ENCODE measurements at regions of chr12 and their contacts with region 1.

Region 1: DNA sequence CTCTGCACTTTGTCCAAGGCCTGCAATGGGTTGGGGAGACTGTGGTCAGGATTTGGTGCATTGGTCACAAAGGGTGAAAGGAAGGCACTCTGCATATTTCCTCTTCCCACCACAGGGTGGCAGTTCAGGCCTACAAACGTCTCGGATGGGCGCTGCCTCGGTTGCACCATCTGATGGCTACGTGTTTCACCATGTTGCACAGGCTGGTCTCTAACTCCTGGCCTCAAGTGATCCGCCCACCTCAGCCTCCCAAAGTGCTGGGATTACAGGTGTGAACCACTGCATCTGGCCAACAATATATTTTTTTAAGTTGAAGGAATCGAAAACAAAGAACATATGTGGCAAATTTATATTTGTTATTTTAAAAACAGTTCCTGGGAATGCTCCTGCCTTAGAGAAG is 35.1 kb downstream of the TMBIM6 start:
- DNase-seq: peak; percentile 64
- ATAC-seq: peak; percentile 93
- H3K4me3 ChIP-seq: peak overlapping the region in 1 of 2 experiments; percentile 16; a peak in 1 of 4 replicates
- H3K27ac ChIP-seq: peak overlapping the region; percentile 60; the same call in 1 of the 2 replicates
- H3K4me1 ChIP-seq: no peaks in the 10 kb centered on the region; the same call in 1 of the 2 replicates
- H3K27me3 ChIP-seq: no peaks in the 10 kb centered on the region
- CTCF ChIP-seq: peak; percentile 89

Region 2: DNA sequence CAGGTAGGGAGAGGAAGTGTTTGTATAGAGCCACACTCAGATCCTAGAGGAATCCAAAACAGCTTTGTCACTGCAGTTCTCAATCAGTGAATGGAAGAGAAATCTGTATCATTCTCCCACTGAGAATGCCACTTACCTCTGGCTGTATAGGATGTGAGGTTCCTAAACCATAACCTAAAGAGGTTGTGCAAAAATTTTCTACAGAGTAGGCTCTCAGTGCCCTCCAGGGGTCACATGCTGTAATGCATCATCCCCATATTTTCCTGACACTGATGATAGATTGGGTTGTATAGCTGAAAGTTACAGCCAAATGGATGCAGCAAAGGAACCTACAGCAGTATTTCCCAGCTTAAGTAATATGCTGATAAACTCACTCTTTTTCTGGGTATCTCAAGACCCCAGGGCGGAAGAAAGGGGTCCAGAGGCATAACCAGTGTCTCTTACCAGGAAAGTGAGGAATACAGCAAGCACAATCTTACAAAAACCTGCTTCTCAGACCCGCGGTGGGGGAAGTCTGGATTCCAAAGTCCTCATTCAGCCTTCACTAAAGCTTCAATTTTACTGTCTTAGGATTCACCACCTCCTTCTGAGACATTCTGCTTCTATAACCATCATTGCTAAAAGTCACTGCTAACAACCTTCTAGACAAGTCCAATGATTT is 62.7 kb after region 1 on chr12:
- CTCF ChIA-PET with region 1: interaction called, 9 read pairs
- POLR2A ChIA-PET with region 1: interaction called, 5 read pairs
- in situ Hi-C with region 1: no loop called
- intact Hi-C with region 1: loop called (anchors 1 kb)
- DNase-seq: no peak
- ATAC-seq: peak; percentile 46; the same call in 1 of the 2 replicates
- H3K4me3 ChIP-seq: no peak overlapping the region
- H3K27ac ChIP-seq: no peak overlapping the region
- H3K4me1 ChIP-seq: peaks cover 16% of the 10 kb centered on the region
- H3K27me3 ChIP-seq: no peaks in the 10 kb centered on the region
- CTCF ChIP-seq: peak; percentile 83

Region 3: DNA sequence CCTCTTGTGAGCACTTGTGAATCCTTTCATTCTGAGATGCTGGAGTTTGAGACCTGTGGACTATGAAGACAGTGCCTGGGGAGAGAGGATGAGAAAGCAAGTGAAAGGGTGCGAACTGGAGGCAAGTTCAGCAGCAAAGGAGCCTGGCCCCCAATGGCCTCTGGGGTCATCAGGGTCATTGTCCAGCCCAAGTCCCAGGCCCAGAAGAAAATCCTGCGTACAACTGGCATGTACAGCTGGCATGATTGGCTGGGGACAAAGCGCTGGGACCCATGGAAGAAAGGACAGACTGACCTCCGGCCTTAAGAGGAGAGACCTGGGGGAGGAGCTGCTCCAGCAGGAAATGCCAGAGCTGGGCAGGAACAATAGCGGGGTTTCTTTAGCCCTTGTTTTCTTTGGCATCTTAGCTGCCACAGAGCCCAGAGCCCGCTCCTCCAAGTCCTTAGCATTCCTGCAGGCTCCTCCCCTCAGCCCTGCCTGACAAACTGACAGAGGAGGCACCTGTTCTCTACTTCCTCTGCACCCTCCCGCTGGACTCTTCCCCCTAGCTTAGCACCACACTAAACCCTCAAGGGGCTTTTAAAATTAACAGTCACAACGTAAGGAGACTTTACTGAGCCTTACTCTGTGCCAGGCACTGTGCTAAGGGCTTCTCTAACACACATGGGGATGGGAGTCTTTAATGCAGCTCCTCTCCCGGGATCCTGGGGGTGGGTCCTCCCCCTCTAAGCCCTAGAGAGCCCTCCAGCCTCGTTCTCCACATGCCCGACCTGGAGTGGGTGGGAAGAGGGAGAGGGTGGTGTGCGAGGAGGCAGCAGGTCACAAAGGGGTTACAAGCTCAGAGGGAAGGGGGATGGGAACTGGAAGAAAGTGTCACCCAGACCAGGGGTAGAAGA is 183.4 kb after region 1 on chr12:
- CTCF ChIA-PET with region 1: no interaction called
- POLR2A ChIA-PET with region 1: no interaction called
- in situ Hi-C with region 1: no loop called
- intact Hi-C with region 1: loop called (anchors 10 kb)
- DNase-seq: no peak
- ATAC-seq: peak; percentile 81
- H3K4me3 ChIP-seq: no peak overlapping the region
- H3K27ac ChIP-seq: peak overlapping the region; percentile 80
- H3K4me1 ChIP-seq: peaks cover 33% of the 10 kb centered on the region
- H3K27me3 ChIP-seq: no peaks in the 10 kb centered on the region
- CTCF ChIP-seq: no peak

Region 4: DNA sequence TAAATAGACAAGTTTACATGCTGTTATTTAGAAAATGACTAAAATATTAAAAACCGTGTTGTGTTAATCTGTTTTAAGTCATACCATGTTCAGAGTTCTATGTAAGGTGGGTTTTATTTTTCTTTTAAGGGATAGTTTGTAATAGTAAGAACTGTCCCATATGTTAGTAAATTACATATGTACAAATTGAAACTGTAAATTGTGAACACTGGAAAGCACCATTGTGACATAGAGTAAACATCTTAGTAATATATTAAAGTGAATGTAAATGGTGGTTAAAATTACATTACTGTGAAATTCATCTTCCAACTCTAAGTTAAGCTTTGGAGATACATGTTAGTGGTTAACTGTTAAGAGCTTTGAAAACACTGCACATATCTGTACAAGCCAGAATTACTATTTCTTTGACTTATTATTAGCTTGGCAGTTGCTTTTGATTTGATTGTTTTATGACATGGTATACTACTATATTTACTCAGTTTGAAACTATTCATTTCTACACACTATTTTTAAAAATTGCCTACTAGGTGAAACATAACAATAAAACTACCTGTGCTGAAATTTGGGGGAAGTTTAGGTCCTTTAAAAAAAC is 700.9 kb after region 1 on chr12:
- CTCF ChIA-PET with region 1: interaction called, 12 read pairs
- POLR2A ChIA-PET with region 1: no interaction called
- in situ Hi-C with region 1: no loop called
- intact Hi-C with region 1: no loop called
- DNase-seq: no peak
- ATAC-seq: no peak
- H3K4me3 ChIP-seq: no peak overlapping the region
- H3K27ac ChIP-seq: no peak overlapping the region
- H3K4me1 ChIP-seq: no peaks in the 10 kb centered on the region
- H3K27me3 ChIP-seq: no peaks in the 10 kb centered on the region
- CTCF ChIP-seq: no peak

Measured in Panc1 (cell line).